A673 (cell line): ENCODE measurements at regions of chr14 and their contacts with region 1.

Region 1: DNA sequence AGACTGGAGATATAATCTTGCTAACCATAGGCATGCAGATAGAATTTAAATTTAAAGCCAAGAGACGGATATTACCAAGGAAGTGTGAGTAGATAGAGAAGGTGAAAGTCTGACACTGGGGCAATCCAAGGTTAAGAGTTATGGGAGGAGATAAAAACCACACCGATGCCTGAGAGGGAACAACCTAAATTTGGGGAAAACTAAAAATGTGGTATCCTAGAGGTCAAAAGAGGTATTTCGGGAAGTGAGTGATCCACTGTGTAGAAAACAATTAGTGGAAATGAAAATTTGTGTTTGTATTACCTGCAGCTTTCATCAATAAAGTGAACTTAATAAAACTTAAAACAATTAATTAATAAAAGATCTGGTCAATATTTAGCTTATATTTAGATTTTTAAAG is 269.0 kb upstream of the RPL10L start:
- DNase-seq: no peak
- H3K4me3 ChIP-seq: no peak overlapping the region
- H3K27ac ChIP-seq: no peak overlapping the region
- H3K4me1 ChIP-seq: no peaks in the 10 kb centered on the region
- H3K27me3 ChIP-seq: no peaks in the 10 kb centered on the region
- CTCF ChIP-seq: no peak

Region 2: DNA sequence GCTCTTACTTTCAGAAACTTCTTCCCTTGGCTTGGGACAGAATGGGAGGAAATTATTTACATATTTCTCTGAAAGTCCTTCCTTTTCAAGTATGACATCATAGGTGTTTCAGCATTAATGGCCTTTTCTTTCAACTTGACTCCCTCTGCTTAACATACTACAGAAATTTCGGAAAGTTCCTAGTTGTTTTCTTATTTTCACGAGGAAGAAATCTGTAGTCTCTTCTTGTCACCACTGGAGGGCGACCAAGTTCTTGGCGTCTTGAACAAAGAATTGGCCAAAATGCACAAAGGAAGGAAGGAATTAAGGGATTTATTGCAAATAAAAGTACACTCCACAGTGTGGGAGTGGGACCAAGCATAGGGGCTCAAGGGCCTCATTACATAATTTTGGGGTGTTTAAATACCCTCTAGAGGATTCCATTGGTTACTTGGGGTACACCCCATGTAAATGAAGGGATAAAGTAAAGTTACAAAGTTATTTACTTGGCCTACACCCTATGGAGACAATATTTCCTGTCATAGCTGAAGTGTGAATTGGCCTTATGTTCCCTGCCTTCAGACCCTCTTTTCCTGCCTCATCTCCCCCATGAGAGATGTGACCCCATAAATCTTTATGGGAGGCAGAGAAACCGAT is 339.4 kb before region 1 on chr14:
- CTCF ChIA-PET with region 1: no interaction called
- POLR2A ChIA-PET with region 1: no interaction called
- intact Hi-C with region 1: loop called (anchors 10 kb)
- DNase-seq: peak; percentile 80
- H3K4me3 ChIP-seq: no peak overlapping the region
- H3K27ac ChIP-seq: no peak overlapping the region
- H3K4me1 ChIP-seq: peaks cover 7% of the 10 kb centered on the region
- H3K27me3 ChIP-seq: no peaks in the 10 kb centered on the region
- CTCF ChIP-seq: peak; percentile 83

Region 3: DNA sequence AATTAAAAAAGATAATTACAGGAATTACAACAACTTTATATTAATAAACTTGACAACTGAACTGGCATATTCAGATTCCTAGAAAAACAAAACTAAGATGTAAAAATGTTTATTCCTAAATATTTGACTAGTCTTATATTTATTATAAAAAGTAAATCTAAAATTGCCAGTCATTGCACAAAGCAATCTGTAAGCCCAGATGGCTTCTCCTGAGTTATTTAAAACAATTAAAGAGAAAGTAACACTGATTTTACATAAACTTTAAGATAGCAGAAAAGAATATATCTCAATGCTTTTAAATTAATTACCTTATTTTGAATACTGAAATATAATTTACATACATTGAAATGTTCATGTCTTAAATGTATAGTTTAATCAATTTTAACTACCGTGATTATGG is 165.1 kb after region 1 on chr14:
- CTCF ChIA-PET with region 1: no interaction called
- POLR2A ChIA-PET with region 1: no interaction called
- intact Hi-C with region 1: no loop called
- DNase-seq: no peak
- H3K4me3 ChIP-seq: no peak overlapping the region
- H3K27ac ChIP-seq: no peak overlapping the region
- H3K4me1 ChIP-seq: no peaks in the 10 kb centered on the region
- H3K27me3 ChIP-seq: peaks cover 3% of the 10 kb centered on the region
- CTCF ChIP-seq: no peak